ENCODE measurements at regions of chr6 and their contacts with region 1.

Region 1: DNA sequence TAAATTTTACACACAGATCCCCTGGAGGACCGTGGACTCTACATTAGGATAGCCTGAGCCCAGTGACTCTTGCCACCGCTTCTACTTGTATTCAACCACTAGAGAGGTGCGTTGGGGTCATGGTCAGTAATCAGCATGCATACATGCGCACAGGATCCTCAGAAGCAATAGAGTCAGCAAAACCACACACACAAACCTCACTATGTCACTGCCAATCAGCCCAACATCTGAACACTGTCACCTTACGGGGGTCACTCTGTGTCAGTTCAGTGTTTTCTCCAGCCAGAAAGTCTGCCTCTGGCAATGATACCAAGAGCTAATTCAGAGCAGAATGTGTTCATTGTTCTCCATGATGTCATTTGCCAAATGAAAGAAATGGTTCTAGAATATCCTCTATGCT is 225.3 kb downstream of the KHDC1L start:
- DNase-seq: no peak
- ATAC-seq: no peak
- H3K4me3 ChIP-seq: no peak overlapping the region
- H3K27ac ChIP-seq: no peak overlapping the region
- H3K4me1 ChIP-seq: no peaks in the 10 kb centered on the region
- H3K27me3 ChIP-seq: no peaks in the 10 kb centered on the region
- CTCF ChIP-seq: no peak

Region 2: GRCh38 chr6:72977114-72977513 is 22.9 kb before region 1 on chr6:
- CTCF ChIA-PET with region 1: interaction called, 10 read pairs
- POLR2A ChIA-PET with region 1: interaction called, 8 read pairs
- in situ Hi-C with region 1: no loop called
- intact Hi-C with region 1: no loop called
- DNase-seq: no peak
- ATAC-seq: no peak
- H3K4me3 ChIP-seq: no peak overlapping the region
- H3K27ac ChIP-seq: no peak overlapping the region
- H3K4me1 ChIP-seq: no peaks in the 10 kb centered on the region
- H3K27me3 ChIP-seq: no peaks in the 10 kb centered on the region
- CTCF ChIP-seq: no peak

Region 3: GRCh38 chr6:73017476-73017875 is 17.5 kb after region 1 on chr6:
- CTCF ChIA-PET with region 1: no interaction called
- POLR2A ChIA-PET with region 1: no interaction called
- in situ Hi-C with region 1: no loop called
- intact Hi-C with region 1: no loop called
- DNase-seq: no peak
- ATAC-seq: no peak
- H3K4me3 ChIP-seq: no peak overlapping the region
- H3K27ac ChIP-seq: no peak overlapping the region
- H3K4me1 ChIP-seq: no peaks in the 10 kb centered on the region
- H3K27me3 ChIP-seq: no peaks in the 10 kb centered on the region
- CTCF ChIP-seq: no peak

Region 4: GRCh38 chr6:73610444-73611275 is 610.7 kb after region 1 on chr6:
- CTCF ChIA-PET with region 1: no interaction called
- POLR2A ChIA-PET with region 1: no interaction called
- in situ Hi-C with region 1: no loop called
- intact Hi-C with region 1: no loop called
- DNase-seq: peak; percentile 63
- ATAC-seq: peak; percentile 77
- H3K4me3 ChIP-seq: no peak overlapping the region; a peak in 1 of 4 replicates
- H3K27ac ChIP-seq: peak overlapping the region; percentile 72
- H3K4me1 ChIP-seq: peaks cover 19% of the 10 kb centered on the region
- H3K27me3 ChIP-seq: no peaks in the 10 kb centered on the region
- CTCF ChIP-seq: peak; percentile 80; the same call in 1 of the 2 replicates

Measured in Panc1 (cell line).